ENCODE measurements at regions of chr6 and their contacts with region 1.

Region 1: DNA sequence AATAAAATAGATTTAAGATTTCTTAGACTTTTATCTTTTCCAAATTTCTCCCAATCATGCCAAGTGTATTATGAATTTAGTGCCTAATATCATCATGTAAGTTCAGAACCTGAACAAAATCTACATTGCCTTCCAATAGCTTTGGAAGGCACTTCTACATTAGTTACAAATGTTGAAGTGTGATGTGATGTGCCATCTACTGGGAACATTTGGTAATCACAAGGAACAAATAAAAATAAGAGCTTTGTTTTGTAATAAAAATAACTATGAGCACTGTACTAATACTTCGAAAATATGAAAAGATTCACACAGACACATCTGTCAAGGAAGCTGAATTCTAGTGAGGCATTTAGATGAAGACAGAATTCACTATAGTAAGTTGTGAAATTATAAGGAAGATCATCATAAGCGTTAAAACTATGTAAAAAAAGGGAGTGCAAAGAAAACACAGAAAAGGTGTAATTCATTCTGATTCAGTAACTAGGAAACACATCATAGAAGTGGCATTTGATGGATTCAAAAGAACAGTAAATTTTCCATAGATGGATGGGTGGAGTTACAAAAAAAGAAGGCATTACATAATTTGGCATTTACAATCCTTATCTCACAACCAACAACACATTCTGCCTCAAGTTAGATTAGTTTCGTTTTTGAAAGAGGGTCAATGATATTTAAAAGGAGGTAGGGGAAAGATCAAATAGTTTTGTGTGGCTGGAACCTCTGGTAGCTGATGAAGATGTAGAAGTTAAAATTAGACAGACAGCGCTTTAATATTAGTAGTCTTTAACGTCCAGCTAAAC is 161.0 kb downstream of the ASCC3 start:
- DNase-seq: peak; percentile 8
- ATAC-seq: peak; percentile 61
- H3K4me3 ChIP-seq: no peak overlapping the region
- H3K27ac ChIP-seq: no peak overlapping the region
- H3K4me1 ChIP-seq: no peaks in the 10 kb centered on the region
- H3K27me3 ChIP-seq: no peaks in the 10 kb centered on the region
- CTCF ChIP-seq: peak; percentile 20 to 60 (median 47); a peak in 5 of 6 replicates
- POLR2A ChIP-seq: no peak
- RAD21 ChIP-seq: peak; percentile 37; the same call in 1 of the 2 replicates

Region 2: DNA sequence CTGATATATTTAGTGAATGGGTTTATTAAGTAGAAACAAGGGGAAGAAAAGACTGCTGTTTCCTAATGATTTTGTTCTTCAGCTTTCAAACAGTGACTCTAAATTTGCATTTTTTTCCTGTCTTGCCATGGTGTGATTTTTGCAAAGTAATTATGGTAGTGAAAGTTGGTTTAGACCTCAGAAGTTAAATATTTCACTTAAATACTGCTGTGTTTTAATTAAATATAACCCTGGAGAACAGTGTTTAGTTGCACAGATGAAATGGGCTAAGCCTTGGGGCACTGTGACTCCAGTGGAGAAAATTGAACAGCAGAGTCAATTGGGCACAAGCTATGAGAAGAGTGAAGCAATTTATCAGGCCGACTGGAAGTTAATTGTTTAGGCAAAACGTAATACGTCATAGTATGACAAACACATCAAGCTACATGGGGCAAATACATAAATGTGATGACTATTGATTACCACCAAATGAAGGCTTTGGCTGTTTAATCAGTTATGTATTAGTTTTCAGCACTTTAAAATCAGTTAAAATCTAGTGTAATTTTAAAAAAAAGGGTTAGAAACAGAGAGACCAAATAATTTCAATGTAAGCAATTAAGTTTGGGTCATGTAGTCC is 614.8 kb before region 1 on chr6:
- CTCF ChIA-PET with region 1: interaction called, 5 read pairs
- POLR2A ChIA-PET with region 1: no interaction called
- RAD21 ChIA-PET with region 1: interaction called in 1 of 2 experiments, 3 read pairs
- intact Hi-C with region 1: loop called (anchors 2 kb)
- DNase-seq: no peak
- ATAC-seq: no peak
- H3K4me3 ChIP-seq: no peak overlapping the region
- H3K27ac ChIP-seq: no peak overlapping the region
- H3K4me1 ChIP-seq: no peaks in the 10 kb centered on the region
- H3K27me3 ChIP-seq: no peaks in the 10 kb centered on the region
- CTCF ChIP-seq: no peak
- POLR2A ChIP-seq: no peak
- RAD21 ChIP-seq: no peak

Region 3: GRCh38 chr6:100710051-100710450 is 10.0 kb before region 1 on chr6:
- CTCF ChIA-PET with region 1: interaction called, 11 read pairs
- POLR2A ChIA-PET with region 1: no interaction called
- RAD21 ChIA-PET with region 1: no interaction called
- intact Hi-C with region 1: no loop called
- DNase-seq: no peak
- ATAC-seq: no peak
- H3K4me3 ChIP-seq: no peak overlapping the region
- H3K27ac ChIP-seq: no peak overlapping the region
- H3K4me1 ChIP-seq: no peaks in the 10 kb centered on the region
- H3K27me3 ChIP-seq: no peaks in the 10 kb centered on the region
- CTCF ChIP-seq: no peak
- POLR2A ChIP-seq: no peak
- RAD21 ChIP-seq: no peak

Region 4: GRCh38 chr6:100808638-100809275 is 88.7 kb after region 1 on chr6:
- CTCF ChIA-PET with region 1: no interaction called
- POLR2A ChIA-PET with region 1: no interaction called
- RAD21 ChIA-PET with region 1: no interaction called
- intact Hi-C with region 1: no loop called
- DNase-seq: no peak
- ATAC-seq: no peak; the same call in 1 of the 2 replicates
- H3K4me3 ChIP-seq: no peak overlapping the region
- H3K27ac ChIP-seq: no peak overlapping the region
- H3K4me1 ChIP-seq: no peaks in the 10 kb centered on the region
- H3K27me3 ChIP-seq: no peaks in the 10 kb centered on the region
- CTCF ChIP-seq: no peak
- POLR2A ChIP-seq: no peak
- RAD21 ChIP-seq: no peak